ENCODE measurements at regions of chr19 and their contacts with region 1.

Region 1: DNA sequence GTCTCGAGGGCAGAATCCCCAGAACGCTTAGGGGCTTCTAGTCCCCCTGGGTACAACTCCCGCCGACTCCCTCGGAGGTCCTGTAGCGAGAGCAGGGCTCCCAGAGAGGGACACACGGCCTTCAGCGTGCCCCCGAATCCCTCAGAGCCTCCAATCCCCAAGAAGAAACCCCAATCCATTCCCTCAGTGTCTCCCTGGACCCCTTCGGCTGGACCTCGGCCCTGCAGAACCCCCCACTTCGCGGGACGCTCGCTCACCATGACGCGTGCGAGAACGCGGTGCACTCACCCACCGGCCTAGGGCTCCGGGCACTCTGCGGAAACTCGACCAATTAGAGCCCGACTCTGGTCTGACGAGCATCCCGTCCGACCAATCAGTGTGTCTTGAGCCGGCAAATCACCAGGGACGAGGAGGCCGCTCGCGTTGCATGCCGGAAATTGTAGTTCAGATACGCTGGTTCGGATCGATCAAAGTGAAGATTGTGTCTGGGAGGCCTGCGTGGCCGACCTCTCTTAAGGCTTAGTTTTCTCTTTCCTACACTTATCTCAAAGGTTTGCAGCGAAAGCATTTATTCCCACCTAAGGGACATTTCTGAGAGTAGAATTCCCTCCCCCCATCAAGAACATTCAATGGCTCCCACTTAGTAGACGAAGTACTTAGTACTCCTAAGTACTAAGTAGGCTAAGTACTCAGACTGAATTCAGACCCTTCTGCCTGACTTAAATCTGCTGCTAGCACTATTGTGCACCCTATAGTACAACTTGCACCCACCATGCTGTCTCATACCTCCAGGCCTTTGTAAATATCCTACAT is at the start of gene TMEM161A:
- DNase-seq: peak; percentile 99
- H3K4me3 ChIP-seq: peak within 1 kb of the TSS; percentile 66 to 87 (median 77)
- H3K27ac ChIP-seq: peak within 1 kb of the TSS; percentile 56 to 81 (median 75)
- H3K4me1 ChIP-seq: peaks cover 0 to 22% (median 13%) of the 10 kb centered on the region in 4 donors
- H3K27me3 ChIP-seq: no peaks in the 10 kb centered on the region
- CTCF ChIP-seq: no peak
- EP300 ChIP-seq: no peak
- POLR2A ChIP-seq: peak; percentile 38 to 52
- total RNA-seq, gene TMEM161A: 14.8 to 28.0 (median 18.3) TPM

Region 2: GRCh38 chr19:19053508-19054314 is 84.7 kb before region 1 on chr19:
- intact Hi-C with region 1: loop called (anchors 2 kb)
- DNase-seq: peak; percentile 79
- H3K4me3 ChIP-seq: no peak overlapping the region
- H3K27ac ChIP-seq: no peak overlapping the region
- H3K4me1 ChIP-seq: no peaks in the 10 kb centered on the region
- H3K27me3 ChIP-seq: no peaks in the 10 kb centered on the region
- CTCF ChIP-seq: peak; percentile 12 to 58 (median 42)
- EP300 ChIP-seq: no peak
- POLR2A ChIP-seq: no peak

Region 3: GRCh38 chr19:19063183-19064097 is 74.9 kb before region 1 on chr19 and contains the start of gene SLC25A42:
- intact Hi-C with region 1: loop called (anchors 2 kb)
- DNase-seq: peak; percentile 100
- H3K4me3 ChIP-seq: peak within 1 kb of the TSS; percentile 64 to 93 (median 92)
- H3K27ac ChIP-seq: peak within 1 kb of the TSS; percentile 79 to 90 (median 88)
- H3K4me1 ChIP-seq: peaks cover 0 to 28% (median 21%) of the 10 kb centered on the region in 4 donors
- H3K27me3 ChIP-seq: no peaks in the 10 kb centered on the region
- CTCF ChIP-seq: no peak
- EP300 ChIP-seq: no peak
- POLR2A ChIP-seq: peak in 1 of 2 donors; percentile 20
- total RNA-seq, gene SLC25A42: 6.3 to 8.2 (median 7.3) TPM

Region 4: DNA sequence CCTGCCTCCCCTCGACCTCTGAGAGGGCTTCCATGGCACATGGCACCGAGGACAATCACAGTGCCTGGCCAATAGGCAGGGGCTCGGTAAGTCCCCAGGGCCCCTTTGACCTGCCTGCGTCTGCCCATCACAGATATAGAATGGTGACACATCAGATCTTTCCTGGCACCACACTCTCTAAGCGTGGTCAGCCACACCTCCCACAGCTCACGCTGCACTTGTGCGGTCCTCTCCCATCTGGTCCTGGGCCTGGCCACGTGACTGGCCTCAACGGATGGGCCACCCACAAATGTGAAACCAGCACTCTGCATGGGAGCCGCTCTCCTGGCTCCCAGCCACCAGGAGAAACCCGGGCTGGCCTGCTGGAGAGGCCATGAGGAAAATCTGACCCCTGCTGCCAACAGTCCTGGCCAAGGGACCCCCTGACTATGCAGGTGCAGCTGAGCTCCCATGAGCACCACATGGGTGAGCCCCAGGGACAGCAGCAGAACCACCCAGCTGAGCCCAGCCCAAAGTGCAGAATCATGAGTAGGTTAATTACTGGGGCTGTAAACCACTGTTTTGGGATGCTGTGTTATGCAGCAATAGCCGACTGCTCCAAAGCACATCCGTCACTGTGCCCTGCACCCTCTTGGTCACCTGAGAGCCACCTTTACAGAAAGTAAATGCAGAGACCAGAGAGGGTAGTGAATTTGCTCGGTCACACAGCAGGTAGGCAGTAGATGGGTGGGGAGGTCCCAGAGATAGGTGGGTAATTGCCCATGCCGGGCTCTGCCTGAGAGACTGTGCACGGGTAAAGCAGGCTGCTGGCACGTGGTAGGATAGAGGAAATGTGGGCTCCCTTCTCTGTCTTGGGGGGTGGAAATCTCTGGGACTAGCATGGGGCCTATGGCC is 41.4 kb after region 1 on chr19:
- intact Hi-C with region 1: loop called (anchors 5 kb)
- DNase-seq: no peak
- H3K4me3 ChIP-seq: no peak overlapping the region
- H3K27ac ChIP-seq: no peak overlapping the region
- H3K4me1 ChIP-seq: no peaks in the 10 kb centered on the region
- H3K27me3 ChIP-seq: no peaks in the 10 kb centered on the region
- CTCF ChIP-seq: no peak
- EP300 ChIP-seq: no peak
- POLR2A ChIP-seq: no peak

Measured in sigmoid colon (tissue), 7 donors.